Prostate gland (tissue), 2 donors: ENCODE measurements at regions of chr10 and their contacts with region 1.

Region 1: DNA sequence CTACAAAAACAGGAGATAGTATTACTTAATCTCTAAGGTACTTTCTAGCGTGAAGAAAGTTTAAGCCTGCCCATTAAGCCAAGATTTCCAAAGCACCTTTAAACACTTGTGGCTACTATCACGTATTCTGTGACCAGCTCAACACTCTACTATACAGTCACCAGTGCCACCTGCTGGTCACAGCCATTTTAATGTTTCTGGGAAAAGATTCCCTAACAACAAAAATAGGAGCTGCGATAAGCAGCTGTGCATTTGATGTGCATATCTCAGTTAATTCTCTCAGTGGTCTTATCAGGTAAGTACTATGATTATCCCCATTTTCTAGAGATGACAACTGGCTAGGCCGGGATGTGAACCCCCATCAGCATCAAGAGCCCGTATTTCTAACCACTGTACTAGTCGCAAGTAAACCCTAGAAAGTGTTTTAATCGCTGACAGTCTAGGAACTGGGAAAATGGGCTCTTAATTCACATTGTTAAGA is 860 bp downstream of the SEC31B start:
- DNase-seq: peak; percentile 77
- H3K4me3 ChIP-seq: peak overlapping the region; percentile 32 to 33
- H3K27ac ChIP-seq: no peak overlapping the region
- H3K4me1 ChIP-seq: no peaks in the 10 kb centered on the region
- H3K27me3 ChIP-seq: no peaks in the 10 kb centered on the region
- CTCF ChIP-seq: peak; percentile 31 to 84 (median 78)
- POLR2A ChIP-seq: no peak

Region 2: GRCh38 chr10:100433253-100434240 is 85.3 kb before region 1 on chr10:
- intact Hi-C with region 1: loop called (anchors 5 kb)
- DNase-seq: peak; percentile 98
- H3K4me3 ChIP-seq: no peak overlapping the region
- H3K27ac ChIP-seq: no peak overlapping the region
- H3K4me1 ChIP-seq: no peaks in the 10 kb centered on the region
- H3K27me3 ChIP-seq: no peaks in the 10 kb centered on the region
- CTCF ChIP-seq: peak; percentile 96 to 100 (median 100)
- POLR2A ChIP-seq: no peak

Region 3: DNA sequence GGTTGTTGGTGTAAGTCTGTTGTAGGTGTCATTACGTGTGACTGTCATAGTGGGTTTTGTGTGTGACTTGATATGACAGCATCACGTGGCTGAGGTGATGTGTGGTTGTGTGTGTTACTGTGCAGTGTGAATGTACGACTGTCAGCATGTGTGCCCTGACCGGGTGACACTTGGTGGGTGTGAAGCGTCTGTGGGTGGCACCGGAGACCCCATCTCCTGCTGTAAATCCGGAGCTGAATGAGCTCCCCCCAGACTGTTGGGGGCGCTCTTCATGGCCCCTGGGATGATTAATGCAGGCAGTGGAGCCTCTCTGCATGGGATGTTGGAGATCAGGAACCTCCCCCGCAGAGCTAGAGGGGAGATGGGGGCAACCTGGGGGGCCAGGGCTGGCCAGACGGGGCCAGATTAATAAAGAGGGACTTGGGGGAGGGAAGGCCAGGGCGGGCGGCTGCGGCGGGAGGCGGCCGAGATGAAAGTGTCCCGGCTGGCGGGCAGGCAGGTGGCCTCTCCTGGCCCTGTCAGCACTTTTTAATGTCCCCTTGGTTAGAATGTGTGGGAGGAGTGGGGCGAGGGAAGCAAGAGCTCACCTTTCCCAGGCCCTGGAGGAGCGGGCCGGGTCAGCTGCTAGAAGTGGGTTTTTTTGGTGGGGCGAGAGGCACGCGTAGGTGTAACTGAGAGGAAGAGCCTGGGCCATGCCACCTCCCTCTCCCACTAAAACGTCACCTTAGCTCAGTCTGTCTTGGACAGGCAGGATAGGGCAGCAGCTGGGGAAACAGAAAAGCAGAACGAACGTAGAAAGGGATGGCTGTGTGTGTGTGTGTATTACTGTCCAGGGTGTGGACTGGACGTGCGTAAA is 51.0 kb after region 1 on chr10:
- intact Hi-C with region 1: no loop called
- DNase-seq: no peak
- H3K4me3 ChIP-seq: no peak overlapping the region
- H3K27ac ChIP-seq: no peak overlapping the region
- H3K4me1 ChIP-seq: no peaks in the 10 kb centered on the region
- H3K27me3 ChIP-seq: no peaks in the 10 kb centered on the region
- CTCF ChIP-seq: no peak
- POLR2A ChIP-seq: no peak

Region 4: DNA sequence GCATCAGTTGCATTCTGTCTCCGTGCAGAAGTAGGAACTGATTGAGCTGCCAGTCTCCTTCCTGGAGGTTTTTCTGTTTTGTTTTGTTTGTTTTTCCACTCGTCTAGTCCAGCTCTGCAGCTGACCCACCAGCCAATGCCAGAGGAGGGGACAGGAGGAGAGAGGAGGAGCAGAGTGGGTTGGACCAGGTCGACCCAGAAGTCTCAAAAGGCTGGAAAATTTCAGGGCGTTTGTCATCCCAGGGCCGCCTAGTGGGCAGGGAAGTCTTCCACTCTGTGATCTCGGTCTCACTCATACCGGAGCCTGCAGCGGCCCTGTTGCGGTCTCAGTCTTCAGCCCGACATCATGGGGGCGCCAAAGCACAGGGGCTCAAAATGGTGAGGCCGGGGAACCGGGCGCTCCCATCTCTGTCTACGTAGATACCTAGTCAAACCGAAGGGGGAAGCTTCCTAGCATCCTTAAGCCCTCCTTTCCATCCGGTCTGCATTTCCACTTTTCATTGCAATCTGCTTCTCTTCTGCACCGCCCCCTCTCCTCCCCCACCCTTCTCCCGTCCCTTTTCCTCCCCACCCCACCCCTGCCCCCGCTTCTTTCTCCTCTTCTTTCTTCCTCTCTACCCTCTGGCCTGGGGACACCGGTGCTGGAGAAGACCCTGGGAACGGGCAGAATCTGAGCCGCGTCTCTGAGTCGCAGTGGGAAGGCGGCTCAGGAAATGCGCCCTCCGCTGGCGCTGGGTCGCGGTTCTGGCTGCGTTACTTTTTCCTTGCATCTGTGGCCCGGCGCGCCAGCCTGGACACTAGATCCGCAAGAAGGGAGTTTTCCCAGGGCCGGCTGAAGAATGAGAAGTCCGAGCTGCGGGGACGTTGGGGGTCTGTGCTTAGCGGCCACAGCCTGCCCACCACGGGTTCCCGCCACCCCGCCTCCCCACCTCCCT is 210.4 kb after region 1 on chr10:
- intact Hi-C with region 1: no loop called
- DNase-seq: no peak
- H3K4me3 ChIP-seq: no peak overlapping the region
- H3K27ac ChIP-seq: no peak overlapping the region
- H3K4me1 ChIP-seq: peaks cover 13% of the 10 kb centered on the region
- H3K27me3 ChIP-seq: peaks cover 56% of the 10 kb centered on the region
- CTCF ChIP-seq: peak in 1 of 4 experiments; percentile 11
- POLR2A ChIP-seq: no peak